ENCODE measurements at regions of chr7 and their contacts with region 1.

Region 1: DNA sequence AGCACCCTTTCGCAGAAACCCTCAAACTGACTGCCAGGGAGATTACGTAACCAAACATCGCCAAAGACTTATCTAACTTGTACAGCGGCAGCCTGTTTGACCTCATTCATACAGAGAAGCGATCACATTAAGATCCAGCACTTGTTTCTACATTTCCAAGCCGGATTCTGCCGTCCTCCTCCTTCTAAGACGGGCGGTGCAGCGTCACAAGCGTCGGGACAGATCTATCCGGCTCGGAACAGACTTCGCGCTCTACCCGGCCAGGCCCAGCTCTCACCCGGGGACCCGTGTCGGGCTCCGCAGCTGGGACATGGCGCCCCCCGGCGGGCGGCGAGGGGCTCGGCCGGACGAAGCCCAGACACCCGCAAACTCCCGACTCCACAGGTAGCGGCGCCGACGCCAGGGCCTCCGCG is 373 bp downstream of the H2AZ2 start:
- DNase-seq: peak; percentile 90
- H3K4me3 ChIP-seq: peak overlapping the region; percentile 61
- H3K27ac ChIP-seq: peak overlapping the region; percentile 96
- H3K4me1 ChIP-seq: no peaks in the 10 kb centered on the region
- H3K27me3 ChIP-seq: no peaks in the 10 kb centered on the region
- CTCF ChIP-seq: peak; percentile 72

Region 2: GRCh38 chr7:44587843-44588711 is 259.4 kb before region 1 on chr7:
- intact Hi-C with region 1: loop called (anchors 5 kb)
- DNase-seq: peak; percentile 71
- H3K4me3 ChIP-seq: no peak overlapping the region
- H3K27ac ChIP-seq: no peak overlapping the region
- H3K4me1 ChIP-seq: no peaks in the 10 kb centered on the region
- H3K27me3 ChIP-seq: no peaks in the 10 kb centered on the region
- CTCF ChIP-seq: peak; percentile 41

Region 3: DNA sequence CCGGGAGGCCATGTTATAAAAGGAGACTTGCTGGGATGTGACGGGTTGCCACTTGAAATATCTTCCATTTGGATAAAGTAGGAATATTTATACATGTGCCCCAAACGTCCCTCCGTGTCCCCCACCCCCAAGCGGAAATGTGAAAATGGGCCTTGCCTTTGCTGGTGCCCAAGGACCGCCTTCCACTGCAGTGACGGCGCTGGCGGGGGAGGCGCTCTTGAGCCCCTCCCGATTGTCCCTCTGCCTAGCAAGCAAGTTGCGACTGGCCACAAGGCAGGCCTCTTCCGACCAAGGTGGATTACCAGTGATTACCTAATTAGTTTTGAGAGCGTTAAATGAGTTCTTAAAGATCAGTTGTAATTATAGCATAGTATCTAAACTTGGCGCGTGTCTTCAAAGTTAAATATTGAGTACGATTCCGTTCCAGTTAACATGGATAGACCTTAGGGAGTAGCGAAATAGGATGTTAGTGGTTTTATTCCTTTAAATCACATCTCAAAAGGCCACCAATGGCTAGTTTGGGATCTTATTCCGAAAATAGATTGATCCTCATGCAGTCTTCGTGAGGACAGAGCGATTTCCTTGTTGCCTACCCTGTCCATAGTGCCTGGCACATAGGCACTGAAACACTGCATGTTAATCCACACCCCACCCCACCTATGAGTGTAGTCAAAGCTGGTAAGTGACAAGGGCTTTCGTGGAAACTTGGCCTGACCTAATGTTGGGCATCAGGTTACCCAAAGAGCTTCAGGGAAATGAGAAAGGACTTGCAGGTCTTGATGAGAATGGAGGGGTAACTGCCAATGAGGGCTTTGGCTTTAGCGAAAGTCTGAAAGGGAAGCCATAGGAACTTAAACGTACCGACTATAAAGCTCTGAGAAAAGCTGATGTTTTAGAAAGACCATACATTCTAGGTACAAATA is 49.9 kb before region 1 on chr7:
- intact Hi-C with region 1: loop called (anchors 5 kb)
- DNase-seq: peak; percentile 93
- H3K4me3 ChIP-seq: peak overlapping the region; percentile 66
- H3K27ac ChIP-seq: peak overlapping the region; percentile 99
- H3K4me1 ChIP-seq: peaks cover 13% of the 10 kb centered on the region
- H3K27me3 ChIP-seq: no peaks in the 10 kb centered on the region
- CTCF ChIP-seq: peak; percentile 45